Caco-2 (cell line): ENCODE measurements at regions of chr9 and their contacts with region 1.

Region 1: DNA sequence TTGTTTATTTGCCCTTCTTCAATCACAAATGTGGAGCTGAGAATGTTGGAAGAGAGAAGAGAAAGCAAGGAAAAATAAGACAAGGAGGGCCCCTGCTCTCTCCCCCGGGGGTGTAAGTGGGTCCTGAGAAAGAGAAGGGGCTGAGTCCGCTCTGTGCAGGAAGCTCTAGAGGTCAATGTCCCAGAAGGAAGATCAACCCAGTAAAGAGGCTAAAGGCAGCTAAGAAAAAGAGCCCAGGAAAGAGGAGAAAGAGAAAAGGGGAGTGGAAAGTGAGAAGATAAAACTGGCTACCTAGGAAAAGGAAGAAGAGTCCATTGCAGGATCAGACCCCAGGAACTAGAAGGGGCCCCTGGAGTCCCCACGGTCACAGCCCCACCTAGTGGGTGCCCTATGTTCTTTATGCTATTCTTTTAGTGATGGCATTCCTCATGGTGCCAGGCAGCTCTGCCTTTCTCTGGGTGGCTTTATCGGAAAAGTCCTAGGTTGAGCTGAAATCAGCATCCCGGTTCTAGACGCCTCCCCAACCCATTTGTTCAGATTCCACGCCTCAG is 583.4 kb downstream of the ACTL7B start:
- DNase-seq: peak; percentile 54 to 70
- H3K4me3 ChIP-seq: peak overlapping the region; percentile 6; the same call in 1 of the 2 replicates
- H3K4me3 Mint-ChIP-seq: peak overlapping the region; percentile 66
- H3K27ac Mint-ChIP-seq: peak overlapping the region; percentile 98
- H3K4me1 ChIP-seq: peaks cover 48% of the 10 kb centered on the region
- H3K4me1 Mint-ChIP-seq: peaks cover 47% of the 10 kb centered on the region
- H3K27me3 ChIP-seq: no peaks in the 10 kb centered on the region
- H3K27me3 Mint-ChIP-seq: no peaks in the 10 kb centered on the region
- CTCF ChIP-seq: peak; percentile 44 to 48

Region 2: DNA sequence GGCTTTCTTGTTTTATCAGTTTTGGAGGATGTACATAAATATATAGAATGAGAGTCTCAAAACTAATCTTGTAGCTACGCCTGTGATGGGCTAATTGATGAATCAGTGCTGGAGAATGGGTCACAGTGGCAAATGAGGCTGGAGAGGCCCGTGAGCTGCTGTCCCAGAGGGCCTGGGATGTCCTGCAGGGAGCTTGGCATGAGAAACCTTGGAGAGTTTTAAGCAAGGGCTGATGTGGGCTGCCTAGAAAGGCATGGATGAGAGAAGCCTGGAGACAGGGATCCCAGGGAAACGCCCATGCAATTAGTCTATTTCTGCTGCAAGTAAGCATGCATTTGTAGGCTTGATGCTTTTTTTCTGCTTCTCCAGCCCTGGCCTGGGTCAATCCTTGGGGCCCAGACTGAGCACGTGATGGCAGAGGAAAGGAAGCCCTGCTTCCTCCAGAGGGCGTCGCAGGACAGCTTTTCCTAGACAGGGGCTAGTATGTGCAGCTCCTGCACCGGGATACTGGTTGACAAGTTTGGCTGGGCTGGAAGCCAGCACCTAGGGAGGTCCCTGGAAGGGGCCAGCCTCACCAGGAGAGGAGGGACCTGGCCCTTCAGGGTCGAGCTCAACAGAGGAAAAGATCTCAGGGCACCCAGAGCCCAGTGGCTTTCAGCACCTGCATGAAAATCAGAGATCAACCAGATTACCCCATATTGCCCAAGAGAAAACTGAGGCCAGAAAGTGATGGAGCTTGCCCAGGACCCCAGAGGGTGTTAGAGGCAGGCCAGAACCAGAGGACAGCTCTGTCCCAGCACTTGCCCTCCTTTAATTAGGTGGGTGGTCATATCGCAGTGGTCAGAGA is 850.3 kb before region 1 on chr9:
- CTCF ChIA-PET with region 1: no interaction called
- POLR2A ChIA-PET with region 1: no interaction called
- intact Hi-C with region 1: loop called (anchors 5 kb)
- DNase-seq: peak; percentile 84 to 87
- H3K4me3 ChIP-seq: no peak overlapping the region
- H3K4me3 Mint-ChIP-seq: no peak overlapping the region
- H3K27ac Mint-ChIP-seq: no peak overlapping the region
- H3K4me1 ChIP-seq: no peaks in the 10 kb centered on the region
- H3K4me1 Mint-ChIP-seq: no peaks in the 10 kb centered on the region
- H3K27me3 ChIP-seq: no peaks in the 10 kb centered on the region
- H3K27me3 Mint-ChIP-seq: no peaks in the 10 kb centered on the region
- CTCF ChIP-seq: peak; percentile 80 to 87

Region 3: DNA sequence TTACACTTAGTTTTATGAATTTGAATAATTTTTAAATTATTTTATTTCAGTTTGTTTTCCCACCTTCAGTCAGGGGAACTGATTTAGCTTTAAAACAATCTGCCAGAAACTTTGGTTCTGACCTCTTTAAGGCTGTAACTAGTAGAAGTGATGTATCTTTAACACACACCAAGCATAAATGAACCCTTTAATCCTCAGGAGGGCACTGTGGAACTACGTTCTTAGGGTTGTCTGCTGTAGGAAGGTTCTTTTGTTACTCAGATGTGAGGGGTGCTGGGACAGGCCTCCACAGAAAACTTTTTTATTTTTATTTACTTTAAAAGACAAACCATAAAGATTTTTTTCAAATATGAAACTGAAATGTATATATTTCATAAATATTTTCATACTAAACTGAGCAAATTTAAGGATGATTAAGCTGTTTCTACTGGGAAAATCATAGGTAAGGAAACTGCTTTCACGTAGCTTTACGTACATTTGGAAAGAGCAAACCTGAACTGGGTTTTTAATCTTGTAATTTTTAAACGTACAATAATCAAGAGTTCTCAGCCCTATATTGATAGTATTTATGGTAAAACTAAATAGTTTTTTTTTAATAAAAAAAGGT is 788.2 kb before region 1 on chr9:
- CTCF ChIA-PET with region 1: no interaction called
- POLR2A ChIA-PET with region 1: no interaction called
- intact Hi-C with region 1: loop called (anchors 1 kb)
- DNase-seq: peak; percentile 52 to 65
- H3K4me3 ChIP-seq: no peak overlapping the region
- H3K4me3 Mint-ChIP-seq: no peak overlapping the region
- H3K27ac Mint-ChIP-seq: no peak overlapping the region
- H3K4me1 ChIP-seq: no peaks in the 10 kb centered on the region
- H3K4me1 Mint-ChIP-seq: no peaks in the 10 kb centered on the region
- H3K27me3 ChIP-seq: no peaks in the 10 kb centered on the region
- H3K27me3 Mint-ChIP-seq: no peaks in the 10 kb centered on the region
- CTCF ChIP-seq: peak; percentile 55 to 61

Region 4: GRCh38 chr9:107637421-107638420 is 634.7 kb before region 1 on chr9:
- CTCF ChIA-PET with region 1: interaction called, 3 read pairs
- POLR2A ChIA-PET with region 1: no interaction called
- intact Hi-C with region 1: loop called (anchors 2 kb)
- DNase-seq: peak in 1 of 2 experiments; percentile 17
- H3K4me3 ChIP-seq: peak overlapping the region; percentile 6; the same call in 1 of the 2 replicates
- H3K4me3 Mint-ChIP-seq: peak overlapping the region; percentile 62
- H3K27ac Mint-ChIP-seq: peak overlapping the region; percentile 48
- H3K4me1 ChIP-seq: peaks cover 16% of the 10 kb centered on the region
- H3K4me1 Mint-ChIP-seq: peaks cover 31% of the 10 kb centered on the region
- H3K27me3 ChIP-seq: no peaks in the 10 kb centered on the region
- H3K27me3 Mint-ChIP-seq: no peaks in the 10 kb centered on the region
- CTCF ChIP-seq: no peak

Region 5: GRCh38 chr9:107976765-107977164 is 295.7 kb before region 1 on chr9:
- CTCF ChIA-PET with region 1: no interaction called
- POLR2A ChIA-PET with region 1: no interaction called
- intact Hi-C with region 1: loop called (anchors 10 kb)
- DNase-seq: no peak
- H3K4me3 ChIP-seq: no peak overlapping the region
- H3K4me3 Mint-ChIP-seq: no peak overlapping the region
- H3K27ac Mint-ChIP-seq: no peak overlapping the region
- H3K4me1 ChIP-seq: no peaks in the 10 kb centered on the region; the same call in 1 of the 2 replicates
- H3K4me1 Mint-ChIP-seq: no peaks in the 10 kb centered on the region
- H3K27me3 ChIP-seq: no peaks in the 10 kb centered on the region
- H3K27me3 Mint-ChIP-seq: peaks cover 4% of the 10 kb centered on the region
- CTCF ChIP-seq: no peak

Region 6: DNA sequence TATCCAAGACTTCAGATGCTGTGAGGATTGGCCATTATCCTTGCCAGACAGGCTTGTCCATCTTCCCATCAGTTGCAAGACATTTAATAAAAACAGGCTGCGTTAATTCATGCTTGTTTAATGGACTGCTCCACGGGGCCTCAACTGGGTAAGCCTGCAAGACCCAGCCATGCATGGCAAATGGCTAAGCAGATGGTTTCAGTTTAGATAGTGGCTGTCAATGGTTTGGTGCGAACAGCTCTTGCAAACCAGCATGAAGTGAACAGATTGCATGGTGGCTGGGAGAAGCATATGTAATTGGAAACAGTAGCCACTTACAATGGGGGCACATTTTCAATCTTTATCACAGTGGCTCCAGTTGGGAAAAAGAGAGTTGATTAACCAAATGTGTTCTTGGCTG is 154.6 kb before region 1 on chr9:
- CTCF ChIA-PET with region 1: no interaction called
- POLR2A ChIA-PET with region 1: no interaction called
- intact Hi-C with region 1: loop called (anchors 5 kb)
- DNase-seq: no peak
- H3K4me3 ChIP-seq: no peak overlapping the region
- H3K4me3 Mint-ChIP-seq: no peak overlapping the region
- H3K27ac Mint-ChIP-seq: no peak overlapping the region
- H3K4me1 ChIP-seq: peaks cover 7% of the 10 kb centered on the region
- H3K4me1 Mint-ChIP-seq: peaks cover 5% of the 10 kb centered on the region
- H3K27me3 ChIP-seq: no peaks in the 10 kb centered on the region
- H3K27me3 Mint-ChIP-seq: no peaks in the 10 kb centered on the region
- CTCF ChIP-seq: no peak

Region 7: GRCh38 chr9:108184941-108185340 is 87.5 kb before region 1 on chr9:
- CTCF ChIA-PET with region 1: no interaction called
- POLR2A ChIA-PET with region 1: no interaction called
- intact Hi-C with region 1: loop called (anchors 1 kb)
- DNase-seq: peak; percentile 71 to 89
- H3K4me3 ChIP-seq: no peak overlapping the region
- H3K4me3 Mint-ChIP-seq: no peak overlapping the region
- H3K27ac Mint-ChIP-seq: peak overlapping the region; percentile 69
- H3K4me1 ChIP-seq: peaks cover 12% of the 10 kb centered on the region
- H3K4me1 Mint-ChIP-seq: no peaks in the 10 kb centered on the region
- H3K27me3 ChIP-seq: no peaks in the 10 kb centered on the region
- H3K27me3 Mint-ChIP-seq: no peaks in the 10 kb centered on the region
- CTCF ChIP-seq: no peak

Region 8: GRCh38 chr9:108347463-108348188 is 75.2 kb after region 1 on chr9:
- CTCF ChIA-PET with region 1: no interaction called
- POLR2A ChIA-PET with region 1: no interaction called
- intact Hi-C with region 1: no loop called
- DNase-seq: no peak
- H3K4me3 ChIP-seq: no peak overlapping the region
- H3K4me3 Mint-ChIP-seq: no peak overlapping the region
- H3K27ac Mint-ChIP-seq: no peak overlapping the region
- H3K4me1 ChIP-seq: no peaks in the 10 kb centered on the region
- H3K4me1 Mint-ChIP-seq: no peaks in the 10 kb centered on the region
- H3K27me3 ChIP-seq: no peaks in the 10 kb centered on the region; the same call in 1 of the 2 replicates
- H3K27me3 Mint-ChIP-seq: no peaks in the 10 kb centered on the region
- CTCF ChIP-seq: no peak